Activated CD4-positive, alpha-beta memory T cell treated with anti-CD3 and anti-CD28 coated beads, Interleukin-2, amount 10 ng/mL, durations not matched to agents 7 days and 5 days (primary cell): ENCODE measurements at regions of chr1 and their contacts with region 1.

Region 1: DNA sequence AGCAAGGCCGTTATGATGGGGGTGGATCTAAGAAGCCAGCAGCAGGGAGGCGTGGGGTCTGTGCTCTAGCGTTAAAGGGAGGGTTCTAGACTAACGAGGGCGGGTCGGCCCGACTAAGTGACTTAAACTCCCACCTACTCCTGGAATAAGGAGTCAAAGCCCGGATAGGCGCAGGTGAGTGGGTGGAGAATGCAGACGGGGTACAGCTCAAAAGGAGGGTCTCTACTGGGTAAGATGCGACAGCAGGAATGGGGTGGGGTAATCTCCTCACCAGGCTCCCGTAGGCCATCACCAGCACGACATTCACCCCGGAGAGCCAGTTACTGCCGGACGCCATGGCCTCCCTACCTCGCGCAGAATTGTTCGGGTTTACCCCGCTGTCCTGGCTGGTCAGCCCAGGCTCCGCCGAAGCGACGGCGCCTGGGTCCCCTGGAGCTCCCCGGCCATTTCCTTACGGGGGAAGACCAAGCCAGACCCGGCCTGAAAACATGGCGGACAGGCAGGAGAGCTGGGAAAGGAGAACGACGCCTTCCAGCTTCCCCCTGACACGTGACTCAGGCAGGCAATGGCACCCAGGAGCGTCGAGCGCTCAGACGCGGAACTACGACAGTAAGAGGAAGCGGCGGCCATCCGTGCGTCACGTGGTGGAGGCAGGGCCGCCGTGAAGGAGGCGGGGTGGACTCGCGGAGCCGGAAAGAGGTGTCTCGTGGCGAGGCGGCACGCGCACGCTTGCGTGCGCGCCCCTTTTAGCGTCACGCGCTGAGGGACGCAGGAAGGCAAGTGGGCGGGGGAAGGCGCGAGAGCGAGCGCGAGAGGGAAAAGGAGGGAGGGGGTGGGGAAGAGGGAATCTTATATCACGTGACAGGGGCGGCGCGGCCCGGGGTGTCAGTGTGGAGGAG is at the start of gene UBAP2L:
- DNase-seq: peak; percentile 99
- H3K4me3 Mint-ChIP-seq: peak within 1 kb of the TSS; percentile 92
- H3K27ac Mint-ChIP-seq: peak within 1 kb of the TSS; percentile 97
- H3K4me1 Mint-ChIP-seq: peaks cover 71% of the 10 kb centered on the region
- H3K27me3 Mint-ChIP-seq: no peaks in the 10 kb centered on the region
- total RNA-seq, gene UBAP2L: 155 to 157 TPM

Region 2: DNA sequence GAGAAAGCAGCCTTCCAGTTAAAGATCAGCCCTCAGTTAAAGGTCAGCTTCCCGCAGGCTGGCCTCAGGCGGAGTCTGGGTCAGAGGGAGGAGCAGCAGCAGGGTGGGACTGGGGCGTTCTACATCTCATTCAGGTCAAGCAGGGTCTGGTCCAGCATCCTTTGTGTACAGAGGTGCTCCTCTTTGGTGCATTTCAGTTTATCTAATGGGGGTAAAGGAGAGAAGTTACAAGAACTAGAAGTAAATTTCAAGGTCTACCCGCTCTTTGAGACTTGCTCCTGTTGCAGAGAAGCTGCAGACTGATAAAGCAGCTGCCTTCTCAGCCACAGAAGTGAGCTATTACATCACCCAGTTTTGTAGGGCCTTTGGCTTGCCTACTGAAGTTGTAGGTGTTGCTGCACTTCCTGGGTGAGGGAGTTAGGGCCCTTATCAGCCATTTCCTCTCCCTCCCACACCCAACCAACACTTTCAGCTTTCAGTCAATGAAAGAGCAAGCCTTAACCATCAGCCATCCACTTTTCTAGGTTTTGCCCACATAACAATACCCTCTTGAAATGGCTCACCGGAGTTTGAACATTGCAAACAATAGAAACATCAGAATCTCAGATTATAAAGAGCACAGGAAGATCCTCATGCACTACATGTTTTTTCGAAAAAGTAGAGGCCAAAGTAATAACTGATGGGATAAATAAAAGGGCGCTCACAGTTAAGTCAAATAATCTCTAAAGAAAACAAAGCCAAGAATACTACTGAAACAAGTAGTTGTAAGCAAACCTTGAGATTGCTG is 62.6 kb before region 1 on chr1:
- CTCF ChIA-PET with region 1: interaction called, 3 read pairs
- POLR2A ChIA-PET with region 1: interaction called, 28 read pairs
- DNase-seq: peak; percentile 83
- H3K4me3 Mint-ChIP-seq: peak overlapping the region; percentile 49
- H3K27ac Mint-ChIP-seq: peak overlapping the region; percentile 92
- H3K4me1 Mint-ChIP-seq: peaks cover 59% of the 10 kb centered on the region
- H3K27me3 Mint-ChIP-seq: no peaks in the 10 kb centered on the region

Region 3: GRCh38 chr1:154198756-154199562 is 21.4 kb before region 1 on chr1:
- CTCF ChIA-PET with region 1: interaction called, 18 read pairs
- POLR2A ChIA-PET with region 1: interaction called, 11 read pairs
- DNase-seq: peak; percentile 36
- H3K4me3 Mint-ChIP-seq: no peak overlapping the region
- H3K27ac Mint-ChIP-seq: no peak overlapping the region
- H3K4me1 Mint-ChIP-seq: no peaks in the 10 kb centered on the region
- H3K27me3 Mint-ChIP-seq: peaks cover 14% of the 10 kb centered on the region

Region 4: DNA sequence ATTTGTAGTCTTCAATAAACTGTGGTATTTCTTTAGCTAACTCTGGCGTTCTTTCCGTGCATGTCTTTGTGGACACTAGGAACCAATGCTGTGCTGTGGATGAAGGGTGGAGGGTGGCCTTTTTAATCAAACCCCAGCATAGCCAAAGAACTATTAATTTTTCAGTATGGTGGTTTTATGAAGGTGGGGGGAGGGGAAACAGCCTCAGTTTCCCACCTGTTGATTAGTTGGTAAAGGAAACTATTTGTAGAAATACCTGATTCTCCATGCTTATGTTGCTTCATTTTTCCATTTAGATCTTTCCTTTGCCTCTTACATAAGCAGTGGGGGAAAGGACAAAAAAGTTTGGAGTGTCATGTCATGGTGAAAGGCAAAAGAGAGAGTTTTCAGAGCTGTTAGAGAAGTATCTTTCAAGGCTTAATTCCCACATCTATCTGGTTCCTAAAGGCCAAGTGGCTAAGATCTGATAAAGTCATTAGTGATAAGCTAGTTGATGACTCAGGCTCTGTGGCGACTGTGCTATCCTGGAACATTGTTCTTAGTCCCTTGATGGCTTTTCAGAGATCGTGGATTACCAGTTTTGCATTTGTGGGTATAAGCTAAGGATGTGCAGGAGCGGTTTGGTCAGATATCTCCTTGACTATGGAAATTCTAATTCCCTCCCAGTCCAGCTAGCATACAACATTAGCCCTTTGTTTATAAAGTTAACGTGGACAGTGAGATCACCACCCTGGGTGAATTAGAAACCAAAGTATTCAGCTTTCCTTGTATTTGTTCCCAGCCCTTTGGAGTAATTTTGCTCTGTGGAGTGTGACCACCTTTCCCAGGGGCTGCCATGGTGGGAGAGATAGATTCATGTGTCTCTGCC is 43.4 kb after region 1 on chr1:
- CTCF ChIA-PET with region 1: interaction called, 3 read pairs
- POLR2A ChIA-PET with region 1: interaction called, 15 read pairs
- DNase-seq: no peak
- H3K4me3 Mint-ChIP-seq: no peak overlapping the region
- H3K27ac Mint-ChIP-seq: peak overlapping the region; percentile 45
- H3K4me1 Mint-ChIP-seq: peaks cover 29% of the 10 kb centered on the region
- H3K27me3 Mint-ChIP-seq: no peaks in the 10 kb centered on the region

Region 5: DNA sequence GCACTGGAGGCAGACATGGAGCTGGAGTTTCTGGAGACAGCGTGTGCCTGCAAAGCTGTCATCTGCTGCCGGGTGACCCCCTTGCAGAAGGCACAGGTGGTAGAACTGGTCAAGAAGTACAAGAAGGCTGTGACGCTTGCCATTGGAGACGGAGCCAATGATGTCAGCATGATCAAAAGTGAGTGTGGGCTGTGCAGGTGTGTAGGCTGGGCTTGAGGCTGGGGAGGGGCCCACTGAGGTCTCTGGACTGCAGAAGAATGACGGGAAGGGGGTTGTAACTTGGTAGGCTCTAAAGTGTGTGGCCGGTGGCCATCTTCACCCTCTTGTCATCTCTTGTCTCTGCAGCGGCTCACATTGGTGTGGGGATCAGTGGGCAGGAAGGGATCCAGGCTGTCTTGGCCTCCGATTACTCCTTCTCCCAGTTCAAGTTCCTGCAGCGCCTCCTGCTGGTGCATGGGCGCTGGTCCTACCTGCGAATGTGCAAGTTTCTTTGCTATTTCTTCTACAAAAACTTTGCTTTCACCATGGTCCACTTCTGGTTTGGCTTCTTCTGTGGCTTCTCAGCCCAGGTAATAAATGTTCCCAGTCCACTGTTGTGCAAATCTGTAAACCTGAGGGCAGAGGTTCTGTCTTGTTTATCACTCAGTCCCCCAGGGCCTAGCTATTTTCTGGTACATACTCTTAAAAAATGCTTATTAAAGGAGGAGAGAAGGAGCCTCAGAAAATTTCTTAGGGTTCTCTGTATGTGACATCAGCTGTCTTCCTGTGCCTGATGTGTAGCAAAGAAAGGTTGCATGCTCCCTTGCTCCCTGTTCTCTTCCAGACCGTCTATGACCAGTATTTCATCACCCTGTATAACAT is 124.9 kb after region 1 on chr1:
- CTCF ChIA-PET with region 1: no interaction called
- POLR2A ChIA-PET with region 1: interaction called, 11 read pairs
- DNase-seq: peak; percentile 87
- H3K4me3 Mint-ChIP-seq: peak overlapping the region; percentile 73
- H3K27ac Mint-ChIP-seq: peak overlapping the region; percentile 65
- H3K4me1 Mint-ChIP-seq: peaks cover 75% of the 10 kb centered on the region
- H3K27me3 Mint-ChIP-seq: no peaks in the 10 kb centered on the region